PC-3 (cell line): ENCODE measurements at regions of chr16 and their contacts with region 1.

Region 1: DNA sequence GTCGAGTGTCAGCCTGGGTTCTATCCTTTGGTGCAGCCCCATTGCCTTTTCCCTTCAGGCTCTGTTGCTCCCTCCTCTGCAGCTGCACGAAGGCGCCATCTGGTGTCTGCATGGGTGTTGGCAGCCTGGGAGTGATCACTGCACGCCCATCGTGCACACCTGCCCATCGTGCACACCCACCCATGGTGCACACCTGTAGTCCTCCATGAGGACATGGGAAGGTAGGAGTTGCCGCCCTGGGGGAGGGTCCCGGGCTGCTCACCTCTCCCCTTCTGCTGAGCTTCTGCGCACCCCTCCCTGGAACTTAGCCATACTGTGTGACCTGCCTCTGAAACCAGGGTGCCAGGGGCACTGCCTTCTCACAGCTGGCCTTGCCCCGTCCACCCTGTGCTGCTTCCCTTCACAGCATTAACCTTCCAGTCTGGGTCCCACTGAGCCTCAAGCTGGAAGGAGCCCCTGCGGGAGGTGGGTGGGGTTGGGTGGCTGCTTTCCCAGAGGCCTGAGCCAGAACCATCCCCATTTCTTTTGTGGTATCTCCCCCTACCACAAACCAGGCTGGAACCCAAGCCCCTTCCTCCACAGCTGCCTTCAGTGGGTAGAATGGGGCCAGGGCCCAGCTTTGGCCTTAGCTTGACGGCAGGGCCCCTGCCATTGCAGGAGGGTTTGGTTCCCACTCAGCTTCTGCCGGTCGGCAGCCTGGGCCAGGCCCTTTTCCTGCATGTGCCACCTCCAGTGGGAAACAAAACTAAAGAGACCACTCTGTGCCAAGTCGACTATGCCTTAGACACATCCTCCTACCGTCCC is 2.9 kb downstream of the CTRL start:
- DNase-seq: peak; percentile 70
- ATAC-seq: peak; percentile 68
- H3K4me3 ChIP-seq: no peak overlapping the region
- H3K27ac ChIP-seq: no peak overlapping the region
- H3K4me1 ChIP-seq: peaks cover 18% of the 10 kb centered on the region
- H3K27me3 ChIP-seq: no peaks in the 10 kb centered on the region
- CTCF ChIP-seq: peak; percentile 82

Region 2: DNA sequence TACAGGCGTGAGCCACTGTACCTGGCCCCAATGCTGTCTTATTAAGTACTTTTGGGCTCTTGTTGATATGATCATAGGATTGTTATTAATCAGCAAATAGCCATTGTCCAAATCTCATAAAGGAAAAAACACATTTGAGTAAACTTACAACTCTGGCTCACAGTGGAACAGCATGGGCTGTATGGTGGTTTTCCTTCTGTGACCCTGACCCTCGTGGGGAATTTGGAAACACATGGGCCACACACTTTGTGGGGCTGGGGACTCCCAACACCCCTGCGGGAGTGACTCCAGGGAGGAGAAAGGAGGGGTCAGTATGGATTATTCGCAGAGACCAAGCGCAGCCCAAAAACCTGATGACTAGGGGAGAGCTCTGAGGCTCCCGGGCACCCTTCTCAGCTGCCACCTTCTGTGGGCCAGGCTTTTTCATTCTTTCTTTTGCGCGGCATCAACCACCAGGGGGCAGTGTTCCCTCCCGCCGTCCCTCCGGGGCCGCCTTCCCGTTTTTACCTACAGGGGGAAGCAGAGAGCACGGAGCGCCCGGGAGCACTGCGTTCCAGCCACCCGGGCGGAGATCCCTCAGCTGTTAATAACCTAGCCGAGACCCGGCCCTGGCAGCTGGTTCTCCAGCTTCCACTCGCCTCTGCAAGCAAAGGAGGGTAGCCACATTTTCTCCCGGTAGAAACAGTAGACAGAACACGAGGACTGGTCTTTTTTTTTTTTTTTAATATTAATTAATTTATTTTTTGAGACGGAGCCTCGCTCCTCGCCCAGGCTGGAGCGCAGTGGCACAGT is 112.3 kb before region 1 on chr16:
- CTCF ChIA-PET with region 1: no interaction called
- POLR2A ChIA-PET with region 1: no interaction called
- intact Hi-C with region 1: loop called (anchors 2 kb)
- DNase-seq: peak; percentile 77
- ATAC-seq: peak; percentile 97
- H3K4me3 ChIP-seq: no peak overlapping the region
- H3K27ac ChIP-seq: no peak overlapping the region
- H3K4me1 ChIP-seq: no peaks in the 10 kb centered on the region
- H3K27me3 ChIP-seq: no peaks in the 10 kb centered on the region
- CTCF ChIP-seq: peak; percentile 97

Region 3: GRCh38 chr16:67841764-67842508 is 86.8 kb before region 1 on chr16 and contains the start of gene THAP11:
- CTCF ChIA-PET with region 1: no interaction called
- POLR2A ChIA-PET with region 1: no interaction called
- intact Hi-C with region 1: loop called (anchors 5 kb)
- DNase-seq: peak; percentile 94
- ATAC-seq: peak; percentile 54
- H3K4me3 ChIP-seq: peak within 1 kb of the TSS; percentile 89
- H3K27ac ChIP-seq: peak within 1 kb of the TSS; percentile 83
- H3K4me1 ChIP-seq: peaks cover 31% of the 10 kb centered on the region
- H3K27me3 ChIP-seq: no peaks in the 10 kb centered on the region
- CTCF ChIP-seq: peak; percentile 63
- total RNA-seq, gene THAP11: 39.1 and 39.8 TPM in 2 replicates

Region 4: DNA sequence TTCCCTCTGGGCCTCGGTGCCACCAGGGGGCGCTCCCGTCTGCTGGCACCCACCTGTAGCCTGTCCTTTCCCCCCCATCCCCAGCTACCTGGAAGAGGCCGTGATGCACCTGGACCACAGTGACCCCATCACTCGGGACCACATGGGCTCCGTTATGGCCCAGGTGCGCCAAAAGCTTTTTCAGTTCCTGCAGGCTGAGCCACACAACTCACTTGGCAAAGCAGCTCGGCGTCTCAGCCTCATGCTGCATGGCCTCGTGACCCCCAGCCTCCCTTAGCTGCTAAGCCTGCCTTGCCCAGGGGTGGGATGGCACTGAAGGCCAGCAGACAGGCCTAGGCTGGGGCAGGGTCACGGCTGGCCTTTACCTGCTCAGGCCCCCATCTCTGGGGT is 44.9 kb before region 1 on chr16:
- CTCF ChIA-PET with region 1: interaction called, 7 read pairs
- POLR2A ChIA-PET with region 1: no interaction called
- intact Hi-C with region 1: loop called (anchors 1 kb)
- DNase-seq: peak; percentile 59
- ATAC-seq: peak; percentile 74
- H3K4me3 ChIP-seq: no peak overlapping the region
- H3K27ac ChIP-seq: no peak overlapping the region
- H3K4me1 ChIP-seq: peaks cover 6% of the 10 kb centered on the region; the same call in 1 of the 2 replicates
- H3K27me3 ChIP-seq: no peaks in the 10 kb centered on the region
- CTCF ChIP-seq: peak; percentile 86